Mammary epithelial cell (primary cell): ENCODE measurements at regions of chr2 and their contacts with region 1.

Region 1: GRCh38 chr2:217729421-217730053 is 273.3 kb downstream of the TNS1 start:
- DNase-seq: no peak
- H3K4me3 ChIP-seq: no peak overlapping the region
- H3K27ac ChIP-seq: no peak overlapping the region
- H3K4me1 ChIP-seq: no peaks in the 10 kb centered on the region
- H3K27me3 ChIP-seq: no peaks in the 10 kb centered on the region
- CTCF ChIP-seq: no peak

Region 2: DNA sequence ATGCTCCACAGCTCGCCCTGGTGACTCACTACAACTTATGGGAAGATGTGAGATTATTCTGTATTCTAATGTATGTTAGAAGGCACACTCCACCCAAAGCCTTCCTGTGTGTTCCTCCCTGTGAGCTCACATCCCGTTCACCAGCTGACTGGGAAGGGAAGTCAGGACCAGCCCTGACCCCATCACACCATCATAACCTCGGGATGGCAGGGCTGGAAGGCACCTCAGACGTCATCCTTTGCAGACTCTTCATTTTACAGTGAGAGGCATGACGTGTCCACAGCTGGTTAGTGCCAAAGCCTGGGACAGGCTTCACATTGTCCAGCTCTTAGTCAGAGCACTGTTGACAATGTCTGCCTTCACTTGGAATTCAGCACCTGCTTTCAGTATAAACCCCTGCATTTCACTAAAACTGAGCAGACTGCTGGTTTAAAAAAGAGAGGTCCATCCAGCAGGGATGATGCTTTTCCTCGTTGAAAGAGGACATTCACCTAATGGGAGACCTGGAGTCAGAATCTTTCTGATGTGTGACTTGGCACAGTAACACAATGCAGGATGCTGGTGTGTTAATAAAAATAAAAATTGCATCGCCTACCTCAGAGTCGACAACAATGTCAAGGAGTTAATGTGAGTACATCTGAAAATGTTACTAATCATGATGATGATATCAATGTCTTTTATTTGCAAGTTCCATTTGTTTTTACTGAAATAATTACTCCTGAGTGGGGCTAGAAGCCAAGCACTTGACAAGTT is 451.7 kb before region 1 on chr2:
- CTCF ChIA-PET with region 1: no interaction called
- dilution Hi-C with region 1: no loop called
- in situ Hi-C with region 1: no loop called
- intact Hi-C with region 1: no loop called
- DNase-seq: peak; percentile 92
- H3K4me3 ChIP-seq: no peak overlapping the region
- H3K27ac ChIP-seq: no peak overlapping the region
- H3K4me1 ChIP-seq: peaks cover 31% of the 10 kb centered on the region
- H3K27me3 ChIP-seq: no peaks in the 10 kb centered on the region
- CTCF ChIP-seq: no peak

Region 3: DNA sequence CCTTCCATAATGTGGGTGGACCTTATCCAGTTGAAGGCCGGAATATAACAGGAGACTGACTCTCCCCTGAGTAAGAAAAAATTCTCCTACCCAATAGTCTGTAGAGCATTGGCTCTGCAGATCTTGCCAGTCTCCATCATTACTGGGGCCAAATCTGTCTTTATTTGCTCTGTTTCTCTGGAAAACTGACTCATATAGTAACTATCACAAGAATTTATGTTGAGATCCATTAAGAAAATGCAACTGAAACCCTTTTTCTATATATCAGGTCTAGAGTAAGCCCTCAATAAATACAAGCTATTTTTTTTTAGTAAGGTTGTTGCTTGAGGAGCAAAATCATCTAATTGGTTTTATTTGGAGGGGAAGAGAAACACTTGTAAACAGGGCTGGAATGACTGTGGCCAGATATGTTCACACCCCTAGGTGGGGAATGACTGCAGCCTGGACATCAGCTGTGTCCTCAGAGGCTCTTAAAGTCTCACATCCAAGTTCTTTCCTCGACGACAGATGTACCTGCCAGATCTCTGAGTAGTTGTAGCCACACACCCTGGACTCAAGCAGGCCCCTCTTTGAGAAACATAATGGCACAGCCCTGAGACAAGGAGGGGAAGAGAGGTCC is 66.4 kb before region 1 on chr2:
- CTCF ChIA-PET with region 1: no interaction called
- dilution Hi-C with region 1: loop called (anchors 5 kb)
- in situ Hi-C with region 1: no loop called
- intact Hi-C with region 1: no loop called
- DNase-seq: no peak
- H3K4me3 ChIP-seq: no peak overlapping the region
- H3K27ac ChIP-seq: no peak overlapping the region
- H3K4me1 ChIP-seq: no peaks in the 10 kb centered on the region
- H3K27me3 ChIP-seq: peaks cover 3% of the 10 kb centered on the region
- CTCF ChIP-seq: no peak

Region 4: GRCh38 chr2:217804786-217805667 is 75.5 kb after region 1 on chr2:
- CTCF ChIA-PET with region 1: no interaction called
- dilution Hi-C with region 1: no loop called
- in situ Hi-C with region 1: no loop called
- intact Hi-C with region 1: no loop called
- DNase-seq: no peak
- H3K4me3 ChIP-seq: no peak overlapping the region
- H3K27ac ChIP-seq: no peak overlapping the region
- H3K4me1 ChIP-seq: no peaks in the 10 kb centered on the region
- H3K27me3 ChIP-seq: no peaks in the 10 kb centered on the region
- CTCF ChIP-seq: no peak

Region 5: GRCh38 chr2:217840522-217840921 is 111.0 kb after region 1 on chr2:
- CTCF ChIA-PET with region 1: interaction called, 11 read pairs
- dilution Hi-C with region 1: no loop called
- in situ Hi-C with region 1: no loop called
- intact Hi-C with region 1: no loop called
- DNase-seq: no peak
- H3K4me3 ChIP-seq: no peak overlapping the region
- H3K27ac ChIP-seq: no peak overlapping the region
- H3K4me1 ChIP-seq: no peaks in the 10 kb centered on the region
- H3K27me3 ChIP-seq: peaks cover 6% of the 10 kb centered on the region
- CTCF ChIP-seq: no peak